B cell (primary cell): ENCODE measurements at regions of chr1 and their contacts with region 1.

Region 1: GRCh38 chr1:154493276-154493675 is 8.7 kb upstream of the TDRD10 start:
- DNase-seq: peak; percentile 68
- ATAC-seq: peak; percentile 61
- H3K4me3 ChIP-seq: peak overlapping the region in 1 of 5 experiments; percentile 39
- H3K4me3 Mint-ChIP-seq: peak overlapping the region; percentile 79
- H3K27ac ChIP-seq: peak overlapping the region in 1 of 2 donors; percentile 30
- H3K27ac Mint-ChIP-seq: peak overlapping the region; percentile 79
- H3K4me1 ChIP-seq: peaks cover 65 to 68% of the 10 kb centered on the region in 2 donors
- H3K4me1 Mint-ChIP-seq: peaks cover 60% of the 10 kb centered on the region
- H3K27me3 ChIP-seq: no peaks in the 10 kb centered on the region
- H3K27me3 Mint-ChIP-seq: no peaks in the 10 kb centered on the region
- CTCF ChIP-seq: no peak

Region 2: GRCh38 chr1:154371436-154371835 is 121.8 kb before region 1 on chr1:
- CTCF ChIA-PET with region 1: no interaction called
- POLR2A ChIA-PET with region 1: no interaction called
- intact Hi-C with region 1: no loop called
- DNase-seq: no peak
- ATAC-seq: no peak
- H3K4me3 ChIP-seq: no peak overlapping the region
- H3K4me3 Mint-ChIP-seq: no peak overlapping the region
- H3K27ac ChIP-seq: no peak overlapping the region
- H3K27ac Mint-ChIP-seq: no peak overlapping the region
- H3K4me1 ChIP-seq: no peaks in the 10 kb centered on the region
- H3K4me1 Mint-ChIP-seq: no peaks in the 10 kb centered on the region
- H3K27me3 ChIP-seq: no peaks in the 10 kb centered on the region
- H3K27me3 Mint-ChIP-seq: no peaks in the 10 kb centered on the region
- CTCF ChIP-seq: no peak

Region 3: DNA sequence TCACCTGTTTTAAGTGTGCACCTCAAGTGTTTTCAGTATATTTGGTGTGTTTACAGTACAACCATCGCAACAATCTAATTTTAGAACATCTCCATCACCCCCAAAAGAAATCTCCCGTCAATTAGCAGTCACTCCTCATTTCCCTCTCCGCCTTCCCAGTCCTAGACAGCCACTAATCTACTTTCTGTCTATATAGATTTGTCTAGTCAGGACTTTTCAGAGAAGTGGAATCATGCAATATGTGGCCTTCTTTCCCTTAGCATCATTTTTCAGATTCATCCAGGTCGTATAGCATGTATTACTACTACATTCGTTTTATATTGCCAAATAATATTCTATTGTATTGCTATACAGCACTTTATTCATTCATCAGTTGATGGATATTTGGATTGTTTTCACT is 10.6 kb after region 1 on chr1:
- CTCF ChIA-PET with region 1: interaction called, 3 read pairs
- POLR2A ChIA-PET with region 1: no interaction called
- intact Hi-C with region 1: loop called (anchors 1 kb)
- DNase-seq: no peak
- ATAC-seq: no peak
- H3K4me3 ChIP-seq: no peak overlapping the region
- H3K4me3 Mint-ChIP-seq: peak overlapping the region; percentile 30
- H3K27ac ChIP-seq: no peak overlapping the region
- H3K27ac Mint-ChIP-seq: no peak overlapping the region
- H3K4me1 ChIP-seq: peaks cover 10 to 17% of the 10 kb centered on the region in 2 donors
- H3K4me1 Mint-ChIP-seq: peaks cover 18% of the 10 kb centered on the region
- H3K27me3 ChIP-seq: peaks cover 0 to 63% (median 36%) of the 10 kb centered on the region in 4 experiments
- H3K27me3 Mint-ChIP-seq: peaks cover 52% of the 10 kb centered on the region
- CTCF ChIP-seq: no peak

Region 4: DNA sequence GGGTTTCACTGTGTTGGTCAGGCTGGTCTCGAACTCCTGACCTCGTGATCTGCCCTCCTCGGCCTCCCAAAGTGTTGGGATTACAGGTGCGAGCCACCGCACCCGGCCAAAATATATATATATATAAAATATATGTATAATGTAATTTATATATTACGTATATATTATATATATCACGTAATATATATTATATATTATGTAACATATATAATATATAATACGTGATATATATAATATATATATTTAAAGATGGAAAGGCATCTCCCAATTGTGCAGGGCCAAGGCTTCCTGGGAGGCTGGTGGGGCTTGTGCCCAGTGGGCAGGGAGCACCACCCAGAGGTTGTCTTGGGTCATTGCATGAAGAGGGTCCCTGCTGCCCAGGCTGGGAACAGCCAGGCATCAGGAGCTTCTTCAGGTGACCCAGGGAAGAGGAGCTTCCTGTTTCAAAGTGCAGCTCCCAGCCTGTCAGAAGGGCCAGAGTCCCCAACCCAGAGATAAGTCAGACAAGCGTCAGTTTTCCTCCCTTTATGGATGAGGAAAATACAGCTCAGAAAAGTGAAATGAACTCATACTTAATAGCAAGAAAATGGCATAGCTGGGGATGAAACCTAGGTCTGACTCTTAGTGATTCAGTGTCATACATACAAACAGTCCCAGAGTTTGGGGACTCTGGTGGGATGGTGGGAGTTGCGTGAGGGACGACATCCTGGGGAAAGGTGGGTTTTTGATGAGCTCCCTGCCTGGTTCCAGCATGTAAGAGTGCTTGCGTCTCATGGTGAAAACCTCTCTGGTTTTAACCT is 53.2 kb after region 1 on chr1:
- CTCF ChIA-PET with region 1: interaction called, 12 read pairs
- POLR2A ChIA-PET with region 1: no interaction called
- intact Hi-C with region 1: no loop called
- DNase-seq: peak; percentile 69
- ATAC-seq: peak; percentile 86
- H3K4me3 ChIP-seq: no peak overlapping the region
- H3K4me3 Mint-ChIP-seq: no peak overlapping the region
- H3K27ac ChIP-seq: no peak overlapping the region
- H3K27ac Mint-ChIP-seq: no peak overlapping the region
- H3K4me1 ChIP-seq: no peaks in the 10 kb centered on the region
- H3K4me1 Mint-ChIP-seq: peaks cover 5% of the 10 kb centered on the region
- H3K27me3 ChIP-seq: peaks cover 0 to 4% (median 0%) of the 10 kb centered on the region in 4 experiments
- H3K27me3 Mint-ChIP-seq: peaks cover 15% of the 10 kb centered on the region
- CTCF ChIP-seq: peak; percentile 83